Aorta (tissue), 5 donors: ENCODE measurements at regions of chr12 and their contacts with region 1.

Region 1: GRCh38 chr12:6778574-6779550 is 6.5 kb downstream of the LAG3 start:
- DNase-seq: peak; percentile 95 to 97
- ATAC-seq: peak; percentile 96
- H3K4me3 ChIP-seq: peak overlapping the region in 1 of 2 donors; percentile 14
- H3K27ac ChIP-seq: peak overlapping the region in 1 of 2 donors; percentile 2
- H3K4me1 ChIP-seq: no peaks in the 10 kb centered on the region
- H3K27me3 ChIP-seq: no peaks in the 10 kb centered on the region

Region 2: DNA sequence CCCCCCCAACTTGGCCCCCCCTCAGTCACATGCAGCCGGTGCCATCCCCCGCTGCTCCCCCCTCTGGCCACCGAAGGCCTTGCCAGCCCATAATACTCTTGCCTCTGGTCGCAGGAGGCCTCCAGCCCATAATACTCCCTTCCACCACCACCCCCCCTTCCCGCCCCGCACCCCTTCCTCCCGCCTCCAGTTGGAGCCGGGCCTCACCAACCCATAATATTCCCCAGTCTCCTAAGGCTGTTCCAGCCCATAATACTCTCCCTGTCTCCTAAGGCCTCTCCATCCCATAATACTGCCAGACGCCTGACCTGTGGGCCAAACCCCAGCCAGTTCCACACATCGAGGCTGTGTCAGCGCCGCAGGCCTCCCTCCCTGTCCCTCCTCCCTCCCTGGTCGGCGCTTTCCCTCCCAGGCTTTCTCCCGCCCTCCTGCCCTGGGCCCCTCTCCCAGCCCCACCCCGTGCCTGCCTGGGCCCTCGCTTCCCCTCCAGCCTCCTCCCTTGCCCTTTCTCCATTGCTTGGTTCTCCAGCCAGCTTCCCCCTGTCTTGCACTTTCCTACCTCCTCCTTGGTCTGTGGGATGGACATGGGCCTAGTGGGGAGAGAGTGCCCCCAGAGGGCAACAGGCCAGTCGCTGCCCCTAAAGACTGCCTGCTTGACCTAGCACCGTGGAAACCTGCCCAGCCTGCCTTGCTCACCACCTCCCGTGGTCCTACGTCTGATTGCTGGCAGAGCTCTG is 164.9 kb before region 1 on chr12:
- intact Hi-C with region 1: loop called (anchors 5 to 10 kb)
- DNase-seq: peak; percentile 95 to 96
- ATAC-seq: peak; percentile 93
- H3K4me3 ChIP-seq: no peak overlapping the region
- H3K27ac ChIP-seq: peak overlapping the region in 1 of 2 donors; percentile 89
- H3K4me1 ChIP-seq: peaks cover 2 to 3% of the 10 kb centered on the region in 2 donors
- H3K27me3 ChIP-seq: no peaks in the 10 kb centered on the region

Region 3: GRCh38 chr12:6735448-6736191 is 43.2 kb before region 1 on chr12:
- intact Hi-C with region 1: loop called (anchors 5 kb)
- DNase-seq: peak in 1 of 2 donors; percentile 71
- ATAC-seq: peak; percentile 80
- H3K4me3 ChIP-seq: no peak overlapping the region
- H3K27ac ChIP-seq: no peak overlapping the region
- H3K4me1 ChIP-seq: no peaks in the 10 kb centered on the region
- H3K27me3 ChIP-seq: no peaks in the 10 kb centered on the region

Region 4: DNA sequence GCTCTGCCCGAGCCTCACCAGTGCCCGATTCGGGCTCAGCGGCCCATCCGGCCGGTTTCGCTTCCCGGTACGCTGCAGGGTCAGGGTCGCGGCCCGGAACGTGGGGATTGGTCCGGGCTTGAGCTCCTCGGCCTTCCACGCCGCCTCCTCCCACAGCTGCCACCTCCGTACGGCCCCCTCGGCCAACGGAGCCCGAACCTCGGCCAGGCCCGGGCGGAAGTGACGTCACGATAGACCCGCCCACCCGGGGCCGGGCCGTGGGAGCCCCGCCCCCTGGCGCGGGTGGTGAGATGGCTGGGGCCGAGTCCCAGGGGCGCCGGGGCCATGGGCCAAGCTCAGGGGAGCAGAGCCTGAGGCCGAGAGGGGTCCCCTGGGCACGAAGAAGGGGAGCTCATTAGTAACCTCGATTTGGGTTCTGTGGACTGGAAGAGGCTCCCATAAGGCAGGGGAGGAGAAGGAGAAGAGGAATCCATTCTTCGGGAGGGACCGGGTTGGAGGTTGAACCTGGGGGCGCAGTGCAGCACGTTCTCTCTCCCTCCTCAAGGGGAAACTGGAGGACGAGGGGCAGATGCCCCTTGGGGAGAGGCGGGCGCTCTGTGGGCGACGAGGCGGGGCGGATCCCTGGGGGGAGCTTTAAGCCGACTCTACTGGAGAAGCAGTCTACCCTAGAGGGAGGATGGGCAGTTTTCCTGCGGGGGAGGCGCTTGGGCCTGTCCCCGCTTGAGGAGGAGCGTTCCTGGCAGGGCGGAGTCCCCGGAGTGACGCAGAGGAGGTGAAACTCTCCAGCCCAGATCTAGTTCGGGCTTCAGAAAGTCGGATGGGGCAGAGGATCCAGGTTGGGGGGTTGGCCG is 25.7 kb before region 1 on chr12 and contains the start of gene MLF2:
- intact Hi-C with region 1: loop called (anchors 1 to 2 kb)
- DNase-seq: peak; percentile 99
- ATAC-seq: peak; percentile 98
- H3K4me3 ChIP-seq: peak within 1 kb of the TSS; percentile 50 to 86
- H3K27ac ChIP-seq: peak within 1 kb of the TSS; percentile 62 to 96
- H3K4me1 ChIP-seq: no peaks in the 10 kb centered on the region
- H3K27me3 ChIP-seq: no peaks in the 10 kb centered on the region
- total RNA-seq, gene MLF2: 110 to 144 TPM